Breast epithelium (tissue), 4 donors: ENCODE measurements at regions of chr2 and their contacts with region 1.

Region 1: GRCh38 chr2:13015532-13016324 is 299.0 kb downstream of the TRIB2 start:
- DNase-seq: no peak
- H3K4me3 ChIP-seq: no peak overlapping the region
- H3K27ac ChIP-seq: no peak overlapping the region
- H3K4me1 ChIP-seq: no peaks in the 10 kb centered on the region
- H3K27me3 ChIP-seq: peaks cover 0 to 3% of the 10 kb centered on the region in 2 donors
- CTCF ChIP-seq: no peak
- POLR2A ChIP-seq: no peak

Region 2: DNA sequence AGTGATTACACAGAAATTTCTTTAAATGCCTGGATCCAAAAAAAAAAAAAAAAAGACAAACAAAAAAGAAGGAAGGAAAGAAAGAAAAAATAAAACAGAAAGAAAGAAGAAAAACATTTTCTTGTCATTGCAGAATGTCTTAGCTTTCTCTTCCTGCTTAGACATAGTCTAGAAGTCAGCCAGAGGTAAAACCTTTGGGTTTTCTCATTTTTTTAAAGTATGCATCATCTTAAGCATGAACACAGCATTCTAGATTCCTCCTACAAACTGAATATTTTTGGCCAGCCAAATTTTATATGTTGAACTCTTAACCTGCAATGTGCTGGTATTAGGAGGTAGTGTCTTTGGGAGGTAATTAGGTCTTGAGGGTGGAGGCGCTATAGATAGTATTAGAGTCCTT is 55.1 kb before region 1 on chr2:
- intact Hi-C with region 1: no loop called
- DNase-seq: no peak
- H3K4me3 ChIP-seq: no peak overlapping the region
- H3K27ac ChIP-seq: no peak overlapping the region
- H3K4me1 ChIP-seq: no peaks in the 10 kb centered on the region
- H3K27me3 ChIP-seq: no peaks in the 10 kb centered on the region
- CTCF ChIP-seq: no peak
- POLR2A ChIP-seq: no peak

Region 3: GRCh38 chr2:12990523-12990922 is 25.2 kb before region 1 on chr2:
- intact Hi-C with region 1: no loop called
- DNase-seq: no peak
- H3K4me3 ChIP-seq: no peak overlapping the region
- H3K27ac ChIP-seq: no peak overlapping the region
- H3K4me1 ChIP-seq: no peaks in the 10 kb centered on the region
- H3K27me3 ChIP-seq: no peaks in the 10 kb centered on the region
- CTCF ChIP-seq: no peak
- POLR2A ChIP-seq: no peak

Region 4: DNA sequence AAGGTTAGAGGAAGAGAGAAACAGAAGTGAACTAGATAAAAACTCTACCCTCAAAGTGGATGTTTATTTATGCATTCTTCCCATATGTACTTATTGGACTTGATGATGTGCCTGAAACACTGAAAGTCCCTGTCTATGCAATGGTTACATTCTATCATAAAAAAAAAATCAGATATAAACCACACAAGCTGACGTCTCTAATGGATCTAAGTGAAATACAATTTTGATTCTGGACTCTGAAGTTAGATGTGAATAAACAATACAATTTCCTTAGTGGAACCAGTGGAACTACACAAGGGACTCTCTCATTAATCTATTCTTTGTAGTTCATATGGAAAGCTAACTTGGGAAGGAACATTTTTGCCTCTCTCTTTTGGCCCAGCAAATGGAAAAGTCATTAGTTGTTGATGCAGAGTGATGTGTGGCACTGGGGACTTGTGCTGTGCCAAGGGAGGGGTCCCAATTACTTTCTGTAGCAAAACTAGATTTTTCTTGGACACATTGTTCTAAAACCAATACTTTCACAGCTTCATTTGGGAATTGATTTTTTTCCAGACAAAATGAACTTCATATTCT is 77.8 kb after region 1 on chr2:
- intact Hi-C with region 1: no loop called
- DNase-seq: no peak
- H3K4me3 ChIP-seq: no peak overlapping the region
- H3K27ac ChIP-seq: no peak overlapping the region
- H3K4me1 ChIP-seq: no peaks in the 10 kb centered on the region
- H3K27me3 ChIP-seq: no peaks in the 10 kb centered on the region
- CTCF ChIP-seq: no peak
- POLR2A ChIP-seq: no peak

Region 5: GRCh38 chr2:14982790-14983189 is 1967.1 kb after region 1 on chr2:
- intact Hi-C with region 1: loop called (anchors 10 kb)
- DNase-seq: no peak
- H3K4me3 ChIP-seq: no peak overlapping the region
- H3K27ac ChIP-seq: no peak overlapping the region
- H3K4me1 ChIP-seq: no peaks in the 10 kb centered on the region
- H3K27me3 ChIP-seq: no peaks in the 10 kb centered on the region
- CTCF ChIP-seq: no peak
- POLR2A ChIP-seq: no peak